AG04449 (cell line): ENCODE measurements at regions of chr7 and their contacts with region 1.

Region 1: GRCh38 chr7:93245525-93246432 is 13.6 kb downstream of the VPS50 start:
- DNase-seq: no peak
- H3K4me3 ChIP-seq: no peak overlapping the region
- CTCF ChIP-seq: peak; percentile 15

Region 2: GRCh38 chr7:93218997-93219827 is 26.6 kb before region 1 on chr7:
- CTCF ChIA-PET with region 1: no interaction called
- POLR2A ChIA-PET with region 1: no interaction called
- DNase-seq: no peak
- H3K4me3 ChIP-seq: no peak overlapping the region
- CTCF ChIP-seq: no peak

Region 3: GRCh38 chr7:93359520-93360198 is 113.9 kb after region 1 on chr7:
- CTCF ChIA-PET with region 1: interaction called, 10 read pairs
- POLR2A ChIA-PET with region 1: no interaction called
- DNase-seq: no peak
- H3K4me3 ChIP-seq: no peak overlapping the region
- CTCF ChIP-seq: no peak

Region 4: DNA sequence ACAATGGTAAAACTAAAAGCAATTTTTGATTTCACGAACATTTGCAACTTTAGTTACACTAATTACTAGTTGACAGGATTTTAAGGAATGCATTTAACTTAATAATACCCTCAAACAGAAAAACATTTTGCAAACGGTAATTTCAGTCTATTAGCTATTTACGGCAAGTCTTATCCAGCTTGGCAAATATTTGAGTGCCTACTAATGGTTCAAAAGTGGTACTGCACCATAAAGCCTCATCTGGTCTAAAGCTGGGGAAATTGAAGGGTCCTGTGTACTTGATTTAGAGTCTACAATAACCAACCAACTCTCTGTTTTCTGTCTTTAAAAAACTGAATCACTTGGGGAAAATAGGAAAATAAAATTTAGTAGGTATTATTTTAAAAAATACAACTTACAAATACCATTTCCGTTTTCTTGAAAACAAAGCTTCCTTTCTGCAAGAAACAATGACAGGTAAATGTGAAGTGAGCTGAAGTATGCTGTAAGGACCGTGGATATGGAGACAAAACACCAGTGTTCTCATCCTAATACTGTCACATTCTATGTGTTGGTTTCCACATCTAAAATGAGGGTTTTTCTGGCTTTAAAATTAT is 128.7 kb after region 1 on chr7:
- CTCF ChIA-PET with region 1: interaction called, 81 read pairs
- POLR2A ChIA-PET with region 1: no interaction called
- DNase-seq: no peak
- H3K4me3 ChIP-seq: no peak overlapping the region
- CTCF ChIP-seq: peak; percentile 68

Region 5: DNA sequence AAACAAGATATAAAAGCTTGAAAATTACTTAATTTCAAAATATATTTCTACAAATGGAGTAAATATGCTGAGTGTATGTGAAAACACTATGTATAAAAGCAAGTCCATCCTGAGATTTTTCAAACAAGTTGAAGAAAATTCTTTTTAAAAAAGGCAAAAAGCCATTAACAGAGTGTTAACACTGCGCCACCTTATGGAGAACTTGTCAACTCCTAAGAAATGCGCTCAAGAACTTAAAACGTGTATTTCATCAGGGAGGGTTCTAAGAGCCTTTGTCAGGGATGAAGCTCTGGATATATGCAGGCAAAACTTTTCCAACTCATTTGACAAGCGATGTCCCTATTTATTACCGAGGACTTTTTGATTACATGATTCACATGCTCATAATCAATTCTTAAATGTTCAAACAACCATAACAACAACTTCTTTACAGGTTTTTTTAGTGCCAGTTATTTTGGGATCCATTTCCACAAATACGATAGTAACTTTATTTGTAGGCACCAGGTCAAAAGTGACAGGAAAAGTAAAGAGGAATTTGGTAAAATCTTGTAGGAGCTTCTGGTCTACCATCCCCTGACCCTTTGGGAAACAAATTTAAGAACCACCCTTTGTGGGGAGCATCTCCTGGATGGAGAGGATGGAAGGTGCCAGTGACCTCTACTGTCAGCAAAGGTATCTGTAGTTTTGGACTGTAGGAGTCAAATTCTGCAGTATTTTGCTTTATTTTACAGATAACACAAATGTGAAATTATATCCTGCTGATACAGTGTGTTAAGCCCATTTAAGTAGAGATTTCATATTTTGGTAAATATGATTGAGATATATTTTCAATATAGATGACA is 305.5 kb after region 1 on chr7:
- CTCF ChIA-PET with region 1: interaction called, 265 read pairs
- POLR2A ChIA-PET with region 1: no interaction called
- DNase-seq: peak; percentile 23
- H3K4me3 ChIP-seq: no peak overlapping the region
- CTCF ChIP-seq: peak; percentile 38